ENCODE measurements at regions of chr9 and their contacts with region 1.

Region 1: DNA sequence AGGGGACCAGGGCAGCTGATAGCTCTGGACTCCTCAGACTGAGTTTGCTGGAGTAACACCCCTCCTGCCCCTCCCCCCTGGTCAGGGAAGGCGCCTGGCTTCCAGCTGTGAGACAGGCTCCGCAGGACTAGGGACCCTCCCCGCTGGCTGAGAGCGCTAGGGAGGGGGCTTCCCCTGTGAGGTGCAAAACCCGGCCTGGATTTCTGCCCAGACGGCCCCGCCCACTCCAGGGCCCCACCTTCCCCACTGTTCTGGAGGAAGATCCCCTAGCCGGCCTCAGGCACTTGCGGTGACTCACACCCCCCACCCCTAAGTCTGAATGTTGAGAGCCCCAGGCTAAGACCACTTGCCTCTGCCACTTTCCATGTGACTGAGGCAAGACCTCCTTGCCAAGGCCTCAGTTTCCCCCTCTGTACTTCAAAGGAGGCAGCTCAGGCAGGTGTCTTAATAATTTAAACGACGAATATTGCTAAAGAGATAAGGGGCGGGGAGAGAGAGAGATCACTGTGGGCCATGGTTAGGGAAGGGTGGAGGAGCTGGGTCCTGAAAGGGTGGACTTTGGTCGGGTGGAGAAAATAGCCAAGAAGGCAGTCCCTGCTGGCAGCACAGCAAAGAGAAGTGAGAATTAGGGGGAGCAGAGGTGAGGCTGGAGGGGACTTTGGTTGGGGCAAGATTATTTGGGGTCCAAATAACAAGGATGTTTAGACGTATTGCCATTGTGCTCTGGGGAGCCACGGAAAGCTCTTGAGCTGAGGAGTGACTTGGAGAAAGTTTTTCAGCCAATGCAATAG is 1.0 kb upstream of the DAB2IP start:
- DNase-seq: peak; percentile 94 to 95
- H3K4me3 ChIP-seq: peak overlapping the region; percentile 69
- H3K4me3 Mint-ChIP-seq: peak overlapping the region; percentile 73
- H3K27ac Mint-ChIP-seq: peak overlapping the region; percentile 18
- H3K4me1 ChIP-seq: peaks cover 22% of the 10 kb centered on the region
- H3K4me1 Mint-ChIP-seq: peaks cover 18% of the 10 kb centered on the region
- H3K27me3 ChIP-seq: no peaks in the 10 kb centered on the region
- H3K27me3 Mint-ChIP-seq: no peaks in the 10 kb centered on the region
- CTCF ChIP-seq: no peak

Region 2: GRCh38 chr9:121667214-121667613 is 16.8 kb after region 1 on chr9:
- CTCF ChIA-PET with region 1: no interaction called
- POLR2A ChIA-PET with region 1: no interaction called
- intact Hi-C with region 1: loop called (anchors 1 kb)
- DNase-seq: no peak
- H3K4me3 ChIP-seq: no peak overlapping the region
- H3K4me3 Mint-ChIP-seq: no peak overlapping the region
- H3K27ac Mint-ChIP-seq: no peak overlapping the region
- H3K4me1 ChIP-seq: peaks cover 22% of the 10 kb centered on the region
- H3K4me1 Mint-ChIP-seq: peaks cover 6% of the 10 kb centered on the region
- H3K27me3 ChIP-seq: no peaks in the 10 kb centered on the region
- H3K27me3 Mint-ChIP-seq: no peaks in the 10 kb centered on the region
- CTCF ChIP-seq: no peak

Region 3: GRCh38 chr9:121735065-121735789 is 84.8 kb after region 1 on chr9:
- CTCF ChIA-PET with region 1: interaction called, 3 read pairs
- POLR2A ChIA-PET with region 1: interaction called, 3 read pairs
- intact Hi-C with region 1: loop called (anchors 5 kb)
- DNase-seq: peak; percentile 49 to 57
- H3K4me3 ChIP-seq: no peak overlapping the region
- H3K4me3 Mint-ChIP-seq: peak overlapping the region; percentile 68
- H3K27ac Mint-ChIP-seq: peak overlapping the region; percentile 9
- H3K4me1 ChIP-seq: peaks cover 36% of the 10 kb centered on the region
- H3K4me1 Mint-ChIP-seq: peaks cover 24% of the 10 kb centered on the region
- H3K27me3 ChIP-seq: no peaks in the 10 kb centered on the region
- H3K27me3 Mint-ChIP-seq: no peaks in the 10 kb centered on the region
- CTCF ChIP-seq: peak; percentile 31 to 57

Region 4: GRCh38 chr9:122005597-122005996 is 355.2 kb after region 1 on chr9:
- CTCF ChIA-PET with region 1: interaction called, 10 read pairs
- POLR2A ChIA-PET with region 1: no interaction called
- intact Hi-C with region 1: no loop called
- DNase-seq: peak in 1 of 2 experiments; percentile 40
- H3K4me3 ChIP-seq: no peak overlapping the region
- H3K4me3 Mint-ChIP-seq: no peak overlapping the region
- H3K27ac Mint-ChIP-seq: no peak overlapping the region
- H3K4me1 ChIP-seq: no peaks in the 10 kb centered on the region
- H3K4me1 Mint-ChIP-seq: no peaks in the 10 kb centered on the region
- H3K27me3 ChIP-seq: no peaks in the 10 kb centered on the region
- H3K27me3 Mint-ChIP-seq: peaks cover 3% of the 10 kb centered on the region
- CTCF ChIP-seq: peak in 1 of 2 experiments; percentile 58

Measured in Caco-2 (cell line).